Activated CD4-positive, alpha-beta T cell treated with anti-CD3 and anti-CD28 coated beads for 36 hours (primary cell): ENCODE measurements at regions of chr9 and their contacts with region 1.

Region 1: GRCh38 chr9:129783516-129784361 is 19.2 kb upstream of the TOR1B start:
- DNase-seq: peak; percentile 84
- ATAC-seq: peak; percentile 100
- H3K4me3 Mint-ChIP-seq: no peak overlapping the region
- H3K27ac Mint-ChIP-seq: peak overlapping the region; percentile 11
- H3K4me1 Mint-ChIP-seq: peaks cover 4% of the 10 kb centered on the region
- H3K27me3 Mint-ChIP-seq: peaks cover 2% of the 10 kb centered on the region

Region 2: DNA sequence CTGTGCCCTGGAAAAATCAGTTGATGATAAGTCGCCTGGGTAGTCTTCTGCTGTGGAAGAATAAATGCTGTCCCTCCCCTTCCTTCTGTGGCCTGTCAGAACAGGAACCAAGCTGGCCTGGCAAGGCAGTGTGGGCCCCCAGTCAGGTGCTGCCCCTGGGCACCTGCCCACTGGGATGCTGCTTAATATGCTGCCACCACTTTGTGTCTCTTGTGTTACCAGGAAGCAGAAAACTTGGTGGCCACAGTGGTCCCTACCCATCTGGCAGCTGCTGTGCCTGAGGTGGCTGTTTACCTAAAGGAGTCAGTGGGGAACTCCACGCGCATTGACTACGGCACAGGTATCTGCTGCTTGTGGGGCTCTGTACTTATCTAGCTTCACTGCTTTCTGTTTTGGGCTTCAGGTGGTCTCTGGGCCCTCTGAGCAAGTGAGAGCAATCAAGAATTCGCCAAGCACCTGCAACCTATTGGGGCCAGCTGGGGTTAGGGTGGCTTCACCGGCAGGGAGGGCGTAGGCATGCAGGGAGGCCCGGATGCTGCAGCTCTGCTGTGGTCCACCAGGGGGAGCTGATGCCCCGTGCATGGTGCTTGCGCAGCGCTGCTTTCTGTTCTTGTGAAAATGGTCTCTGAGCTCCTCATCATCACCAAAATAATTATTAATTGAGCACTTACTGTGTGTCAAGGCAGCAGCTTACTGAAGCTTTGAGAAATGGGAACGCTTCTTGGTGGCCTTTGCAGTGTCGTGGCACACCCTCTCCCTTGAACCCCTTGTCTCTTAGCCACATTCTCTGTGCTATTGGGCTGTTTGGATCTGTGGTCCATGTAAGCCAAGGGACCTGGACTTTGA is 652.2 kb before region 1 on chr9:
- CTCF ChIA-PET with region 1: interaction called, 5 read pairs
- POLR2A ChIA-PET with region 1: no interaction called
- intact Hi-C with region 1: loop called (anchors 2 to 10 kb)
- DNase-seq: peak; percentile 91
- ATAC-seq: peak; percentile 100
- H3K4me3 Mint-ChIP-seq: no peak overlapping the region
- H3K27ac Mint-ChIP-seq: no peak overlapping the region
- H3K4me1 Mint-ChIP-seq: peaks cover 6% of the 10 kb centered on the region
- H3K27me3 Mint-ChIP-seq: no peaks in the 10 kb centered on the region

Region 3: DNA sequence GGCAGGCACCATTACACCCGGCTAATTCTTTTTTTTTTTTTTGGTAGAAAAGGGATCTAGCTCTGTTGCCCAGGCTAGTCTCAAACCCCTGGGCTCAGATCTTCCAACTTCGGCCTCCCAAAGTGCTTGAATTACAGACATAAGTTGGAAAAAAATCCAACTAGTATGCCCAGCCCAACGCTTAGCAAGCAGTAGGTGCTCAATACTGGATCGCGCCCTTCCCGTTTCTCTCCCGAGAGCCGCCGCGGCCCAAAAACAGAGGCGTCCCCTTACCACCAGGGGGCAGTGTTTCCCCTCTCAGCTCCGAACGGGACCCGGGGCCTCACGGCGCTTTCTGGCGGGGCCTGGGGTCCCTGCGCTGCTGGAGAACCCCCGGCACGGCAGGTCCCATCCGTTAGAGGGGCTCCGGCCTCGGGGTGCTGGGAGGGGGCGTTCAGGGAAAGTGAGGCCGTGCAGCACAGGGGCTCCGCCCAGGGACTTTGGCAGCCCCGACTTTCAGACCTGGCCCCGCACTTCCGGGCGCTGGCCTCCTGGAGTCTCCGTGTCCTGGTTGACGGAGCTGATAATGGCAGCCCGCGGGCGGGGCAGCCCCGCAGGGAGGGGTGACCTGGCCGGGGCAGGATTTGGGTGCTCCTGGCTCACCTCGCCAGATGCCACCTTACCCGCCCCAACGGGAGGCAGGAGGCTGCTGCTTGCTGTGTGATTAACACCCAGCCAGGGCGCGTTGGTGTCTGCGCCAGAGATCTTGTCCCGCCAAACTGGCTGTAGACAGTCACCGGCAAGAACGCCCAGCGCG is 46.1 kb before region 1 on chr9:
- CTCF ChIA-PET with region 1: interaction called, 101 read pairs
- POLR2A ChIA-PET with region 1: no interaction called
- intact Hi-C with region 1: loop called (anchors 1 kb)
- DNase-seq: peak; percentile 93
- ATAC-seq: peak; percentile 89
- H3K4me3 Mint-ChIP-seq: peak overlapping the region; percentile 55
- H3K27ac Mint-ChIP-seq: no peak overlapping the region
- H3K4me1 Mint-ChIP-seq: peaks cover 6% of the 10 kb centered on the region
- H3K27me3 Mint-ChIP-seq: no peaks in the 10 kb centered on the region

Region 4: GRCh38 chr9:129796029-129796910 is 12.5 kb after region 1 on chr9:
- CTCF ChIA-PET with region 1: interaction called, 20 read pairs
- POLR2A ChIA-PET with region 1: no interaction called
- intact Hi-C with region 1: no loop called
- DNase-seq: no peak
- ATAC-seq: no peak
- H3K4me3 Mint-ChIP-seq: no peak overlapping the region
- H3K27ac Mint-ChIP-seq: no peak overlapping the region
- H3K4me1 Mint-ChIP-seq: no peaks in the 10 kb centered on the region
- H3K27me3 Mint-ChIP-seq: no peaks in the 10 kb centered on the region

Region 5: DNA sequence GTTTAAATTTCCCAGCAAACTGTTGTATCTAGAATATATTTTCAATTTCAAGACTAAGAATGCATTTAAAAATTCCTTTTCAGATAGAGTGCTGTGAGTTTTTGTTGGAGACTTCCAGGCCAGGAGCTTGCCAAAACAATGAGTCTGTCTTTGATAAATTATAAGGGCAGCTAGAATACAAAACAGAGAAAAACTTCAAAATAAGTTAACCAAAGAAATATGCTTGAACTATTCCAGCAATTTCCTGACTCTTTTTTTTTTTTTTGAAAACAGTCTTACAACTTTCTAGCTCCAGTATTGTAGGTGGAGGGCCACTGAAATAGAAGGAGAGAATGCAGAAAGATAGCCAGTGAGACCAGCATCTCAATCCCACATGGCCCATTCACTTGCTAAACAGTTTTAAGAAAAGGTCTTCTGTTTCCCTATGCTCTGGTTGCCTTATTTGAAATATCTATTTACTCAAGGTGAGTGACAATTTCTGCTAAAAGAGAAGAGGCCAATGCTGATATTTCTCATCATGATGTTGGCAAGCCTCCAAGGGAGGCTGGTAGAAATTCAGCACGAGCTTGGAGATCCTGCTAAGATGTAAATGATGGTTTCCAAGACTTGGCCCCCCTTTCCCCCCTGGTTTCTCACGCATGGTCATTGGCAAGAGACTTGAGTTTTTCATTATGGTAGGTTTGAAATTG is 154.7 kb after region 1 on chr9:
- CTCF ChIA-PET with region 1: no interaction called
- POLR2A ChIA-PET with region 1: no interaction called
- intact Hi-C with region 1: no loop called
- DNase-seq: no peak
- ATAC-seq: no peak
- H3K4me3 Mint-ChIP-seq: no peak overlapping the region
- H3K27ac Mint-ChIP-seq: peak overlapping the region; percentile 64
- H3K4me1 Mint-ChIP-seq: peaks cover 66% of the 10 kb centered on the region
- H3K27me3 Mint-ChIP-seq: no peaks in the 10 kb centered on the region